ENCODE measurements at regions of chr7 and their contacts with region 1.

Region 1: DNA sequence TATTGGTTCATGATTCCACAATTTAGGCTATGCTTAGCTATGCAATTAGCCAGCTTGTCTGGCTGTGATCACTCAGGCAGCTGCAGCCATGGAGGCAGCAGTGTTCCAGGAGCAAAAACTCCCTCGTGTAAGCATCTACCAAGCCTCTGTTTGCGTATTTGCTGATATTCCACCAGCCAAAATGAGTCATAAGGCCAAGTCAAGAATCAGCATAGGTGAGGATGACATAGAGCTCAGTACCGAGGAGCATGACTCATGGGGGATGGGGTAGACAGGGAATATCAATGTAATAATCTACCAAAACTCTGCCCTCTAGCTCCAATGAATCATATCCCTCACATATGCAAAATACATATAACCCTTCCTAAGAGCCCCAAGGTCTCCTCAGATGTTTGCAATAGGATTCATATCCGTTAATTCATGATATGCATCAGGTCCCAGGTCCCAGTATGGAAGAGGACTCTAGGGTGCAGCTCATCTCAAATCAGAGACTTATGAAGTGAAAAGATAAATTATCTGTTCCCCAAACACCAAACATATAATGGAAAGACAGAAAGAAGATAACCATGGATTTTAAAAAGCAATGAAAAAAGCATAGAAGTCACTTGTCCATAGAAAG is 63.1 kb downstream of the IMMP2L start:
- DNase-seq: peak; percentile 98
- ATAC-seq: peak; percentile 91
- H3K4me3 ChIP-seq: peak overlapping the region; percentile 8; the same call in 1 of the 2 replicates
- H3K27ac ChIP-seq: peak overlapping the region; percentile 98
- H3K4me1 ChIP-seq: peaks cover 26% of the 10 kb centered on the region
- H3K27me3 ChIP-seq: no peaks in the 10 kb centered on the region
- CTCF ChIP-seq: no peak

Region 2: DNA sequence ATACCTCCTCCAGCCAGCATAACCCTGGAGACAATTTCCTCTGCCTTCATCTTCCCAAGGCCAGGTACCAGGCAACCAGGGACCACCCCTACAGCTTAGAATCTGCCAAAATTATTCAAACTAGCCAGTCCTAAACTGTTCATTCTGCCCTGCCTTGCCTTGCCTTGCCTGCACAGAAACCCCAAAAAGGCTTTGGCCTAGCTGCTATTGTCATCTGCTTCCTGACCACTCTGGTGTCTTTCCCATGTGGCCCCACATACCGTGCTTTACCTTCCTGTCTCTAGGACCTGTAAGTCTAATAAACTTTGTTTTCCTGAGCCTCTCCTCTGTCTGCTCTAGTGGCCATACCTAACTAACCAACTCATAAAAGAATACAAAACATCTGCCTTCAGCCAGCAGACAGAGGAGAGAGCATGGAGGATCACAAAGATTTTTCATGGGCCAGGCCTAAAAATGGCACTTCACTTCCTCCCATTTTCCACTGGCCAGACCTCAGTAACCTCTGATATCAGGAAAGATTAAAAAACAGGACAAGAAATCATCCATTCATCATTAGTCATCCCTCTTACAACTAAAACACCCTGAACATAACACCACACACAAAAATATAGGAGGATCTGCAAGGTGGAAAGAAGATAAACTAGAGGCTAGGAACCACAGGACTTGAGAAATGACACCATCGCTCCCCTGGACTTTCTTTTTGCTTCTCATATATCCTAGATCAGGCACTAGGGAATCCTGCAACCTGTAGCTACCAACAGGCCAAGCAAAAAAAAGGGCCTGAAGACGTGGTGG is 11.6 kb after region 1 on chr7:
- CTCF ChIA-PET with region 1: interaction called, 12 read pairs
- POLR2A ChIA-PET with region 1: interaction called, 10 read pairs
- intact Hi-C with region 1: loop called (anchors 1 kb)
- DNase-seq: peak; percentile 35
- ATAC-seq: peak; percentile 36
- H3K4me3 ChIP-seq: no peak overlapping the region
- H3K27ac ChIP-seq: peak overlapping the region; percentile 96
- H3K4me1 ChIP-seq: peaks cover 50% of the 10 kb centered on the region
- H3K27me3 ChIP-seq: no peaks in the 10 kb centered on the region
- CTCF ChIP-seq: no peak

Region 3: DNA sequence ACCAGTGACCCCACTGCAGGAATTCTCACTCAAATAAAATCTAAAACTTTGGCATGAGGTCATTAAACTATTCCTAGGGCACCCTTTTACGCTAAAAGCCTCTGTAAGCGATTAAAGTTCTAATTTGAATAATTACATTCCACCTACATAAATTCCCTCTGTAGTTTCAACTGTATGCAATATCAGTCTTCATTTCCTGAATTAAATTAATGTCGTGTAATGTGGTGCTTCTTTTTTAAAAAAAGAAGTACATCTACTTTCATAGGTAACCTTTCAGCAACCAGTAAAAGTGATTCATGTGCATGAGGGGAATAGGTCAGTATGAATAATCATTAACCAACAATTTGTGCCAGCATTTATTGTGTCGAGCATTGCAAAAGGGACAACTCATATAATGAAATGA is 18.4 kb after region 1 on chr7:
- CTCF ChIA-PET with region 1: interaction called, 3 read pairs
- POLR2A ChIA-PET with region 1: no interaction called
- intact Hi-C with region 1: loop called (anchors 2 kb)
- DNase-seq: peak; percentile 88
- ATAC-seq: peak; percentile 64
- H3K4me3 ChIP-seq: peak overlapping the region; percentile 24; the same call in 1 of the 2 replicates
- H3K27ac ChIP-seq: peak overlapping the region; percentile 100
- H3K4me1 ChIP-seq: peaks cover 28% of the 10 kb centered on the region
- H3K27me3 ChIP-seq: no peaks in the 10 kb centered on the region
- CTCF ChIP-seq: no peak

Region 4: DNA sequence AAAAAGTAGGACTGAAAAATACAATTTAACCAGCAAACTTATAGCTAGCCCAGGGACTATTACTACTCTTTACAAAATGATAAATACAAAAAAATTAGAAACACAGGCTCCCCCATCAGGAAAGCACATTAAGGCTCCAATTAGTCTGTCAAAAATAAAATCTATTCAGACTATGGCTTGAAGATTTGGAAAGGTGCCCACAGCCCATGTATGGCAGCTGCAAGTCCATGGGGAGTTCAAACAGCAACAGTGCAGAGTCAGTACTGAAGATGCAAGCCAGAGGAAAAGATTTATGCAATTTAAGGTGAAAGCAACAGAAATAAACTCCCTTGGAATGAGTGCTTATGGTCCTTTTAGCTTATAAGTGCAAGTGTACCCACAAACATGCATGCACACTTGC is 33.5 kb after region 1 on chr7:
- CTCF ChIA-PET with region 1: no interaction called
- POLR2A ChIA-PET with region 1: no interaction called
- intact Hi-C with region 1: loop called (anchors 5 kb)
- DNase-seq: no peak
- ATAC-seq: no peak
- H3K4me3 ChIP-seq: no peak overlapping the region
- H3K27ac ChIP-seq: no peak overlapping the region
- H3K4me1 ChIP-seq: peaks cover 30% of the 10 kb centered on the region
- H3K27me3 ChIP-seq: no peaks in the 10 kb centered on the region
- CTCF ChIP-seq: no peak

Region 5: GRCh38 chr7:111650412-111650999 is 151.4 kb after region 1 on chr7:
- CTCF ChIA-PET with region 1: no interaction called
- POLR2A ChIA-PET with region 1: no interaction called
- intact Hi-C with region 1: loop called (anchors 5 kb)
- DNase-seq: peak; percentile 86
- ATAC-seq: peak; percentile 97
- H3K4me3 ChIP-seq: no peak overlapping the region
- H3K27ac ChIP-seq: peak overlapping the region; percentile 70
- H3K4me1 ChIP-seq: peaks cover 11% of the 10 kb centered on the region
- H3K27me3 ChIP-seq: no peaks in the 10 kb centered on the region
- CTCF ChIP-seq: no peak

Measured in PC-3 (cell line).